Caco-2 (cell line): ENCODE measurements at regions of chr5 and their contacts with region 1.

Region 1: GRCh38 chr5:147935032-147935431 is 28.7 kb upstream of the C5orf46 start:
- DNase-seq: peak in 1 of 2 experiments; percentile 53
- H3K4me3 ChIP-seq: no peak overlapping the region
- H3K4me3 Mint-ChIP-seq: no peak overlapping the region
- H3K27ac Mint-ChIP-seq: no peak overlapping the region
- H3K4me1 ChIP-seq: no peaks in the 10 kb centered on the region
- H3K4me1 Mint-ChIP-seq: no peaks in the 10 kb centered on the region
- H3K27me3 ChIP-seq: no peaks in the 10 kb centered on the region
- H3K27me3 Mint-ChIP-seq: no peaks in the 10 kb centered on the region
- CTCF ChIP-seq: peak; percentile 50 to 57

Region 2: GRCh38 chr5:147628058-147628895 is 306.8 kb before region 1 on chr5:
- CTCF ChIA-PET with region 1: no interaction called
- POLR2A ChIA-PET with region 1: no interaction called
- intact Hi-C with region 1: loop called (anchors 1 kb)
- DNase-seq: peak; percentile 73 to 85
- H3K4me3 ChIP-seq: no peak overlapping the region
- H3K4me3 Mint-ChIP-seq: no peak overlapping the region
- H3K27ac Mint-ChIP-seq: no peak overlapping the region
- H3K4me1 ChIP-seq: no peaks in the 10 kb centered on the region
- H3K4me1 Mint-ChIP-seq: no peaks in the 10 kb centered on the region
- H3K27me3 ChIP-seq: no peaks in the 10 kb centered on the region; the same call in 1 of the 2 replicates
- H3K27me3 Mint-ChIP-seq: no peaks in the 10 kb centered on the region
- CTCF ChIP-seq: peak; percentile 80 to 85

Region 3: GRCh38 chr5:147675168-147675567 is 259.9 kb before region 1 on chr5:
- CTCF ChIA-PET with region 1: no interaction called
- POLR2A ChIA-PET with region 1: no interaction called
- intact Hi-C with region 1: loop called (anchors 2 kb)
- DNase-seq: peak in 1 of 2 experiments; percentile 65
- H3K4me3 ChIP-seq: no peak overlapping the region
- H3K4me3 Mint-ChIP-seq: no peak overlapping the region
- H3K27ac Mint-ChIP-seq: no peak overlapping the region
- H3K4me1 ChIP-seq: no peaks in the 10 kb centered on the region; the same call in 1 of the 2 replicates
- H3K4me1 Mint-ChIP-seq: no peaks in the 10 kb centered on the region
- H3K27me3 ChIP-seq: no peaks in the 10 kb centered on the region
- H3K27me3 Mint-ChIP-seq: peaks cover 3% of the 10 kb centered on the region
- CTCF ChIP-seq: peak; percentile 66 to 71

Region 4: GRCh38 chr5:147857302-147858129 is 77.5 kb before region 1 on chr5:
- CTCF ChIA-PET with region 1: interaction called, 3 read pairs
- POLR2A ChIA-PET with region 1: no interaction called
- intact Hi-C with region 1: loop called (anchors 1 kb)
- DNase-seq: peak; percentile 66 to 71
- H3K4me3 ChIP-seq: no peak overlapping the region
- H3K4me3 Mint-ChIP-seq: no peak overlapping the region
- H3K27ac Mint-ChIP-seq: no peak overlapping the region
- H3K4me1 ChIP-seq: no peaks in the 10 kb centered on the region; the same call in 1 of the 2 replicates
- H3K4me1 Mint-ChIP-seq: peaks cover 6% of the 10 kb centered on the region
- H3K27me3 ChIP-seq: no peaks in the 10 kb centered on the region
- H3K27me3 Mint-ChIP-seq: no peaks in the 10 kb centered on the region
- CTCF ChIP-seq: peak; percentile 77 to 81

Region 5: GRCh38 chr5:147887024-147887627 is 47.9 kb before region 1 on chr5:
- CTCF ChIA-PET with region 1: interaction called, 10 read pairs
- POLR2A ChIA-PET with region 1: no interaction called
- intact Hi-C with region 1: loop called (anchors 1 kb)
- DNase-seq: peak in 1 of 2 experiments; percentile 44
- H3K4me3 ChIP-seq: no peak overlapping the region
- H3K4me3 Mint-ChIP-seq: no peak overlapping the region
- H3K27ac Mint-ChIP-seq: no peak overlapping the region
- H3K4me1 ChIP-seq: peaks cover 6% of the 10 kb centered on the region
- H3K4me1 Mint-ChIP-seq: peaks cover 7% of the 10 kb centered on the region
- H3K27me3 ChIP-seq: no peaks in the 10 kb centered on the region
- H3K27me3 Mint-ChIP-seq: no peaks in the 10 kb centered on the region
- CTCF ChIP-seq: peak; percentile 56 to 64

Region 6: GRCh38 chr5:147893820-147894219 is 41.2 kb before region 1 on chr5:
- CTCF ChIA-PET with region 1: no interaction called
- POLR2A ChIA-PET with region 1: no interaction called
- intact Hi-C with region 1: loop called (anchors 2 kb)
- DNase-seq: no peak
- H3K4me3 ChIP-seq: no peak overlapping the region
- H3K4me3 Mint-ChIP-seq: no peak overlapping the region
- H3K27ac Mint-ChIP-seq: no peak overlapping the region
- H3K4me1 ChIP-seq: peaks cover 24% of the 10 kb centered on the region
- H3K4me1 Mint-ChIP-seq: peaks cover 7% of the 10 kb centered on the region
- H3K27me3 ChIP-seq: no peaks in the 10 kb centered on the region
- H3K27me3 Mint-ChIP-seq: no peaks in the 10 kb centered on the region
- CTCF ChIP-seq: no peak

Region 7: GRCh38 chr5:148166550-148167283 is 231.7 kb after region 1 on chr5:
- CTCF ChIA-PET with region 1: no interaction called
- POLR2A ChIA-PET with region 1: no interaction called
- intact Hi-C with region 1: no loop called
- DNase-seq: no peak
- H3K4me3 ChIP-seq: no peak overlapping the region
- H3K4me3 Mint-ChIP-seq: no peak overlapping the region
- H3K27ac Mint-ChIP-seq: no peak overlapping the region
- H3K4me1 ChIP-seq: peaks cover 13% of the 10 kb centered on the region; the same call in 1 of the 2 replicates
- H3K4me1 Mint-ChIP-seq: peaks cover 9% of the 10 kb centered on the region
- H3K27me3 ChIP-seq: no peaks in the 10 kb centered on the region
- H3K27me3 Mint-ChIP-seq: no peaks in the 10 kb centered on the region
- CTCF ChIP-seq: no peak